WTC11 (cell line): ENCODE measurements at regions of chr12 and their contacts with region 1.

Region 1: GRCh38 chr12:89542912-89543592 is 17.2 kb upstream of the POC1B start:
- DNase-seq: peak; percentile 70
- ATAC-seq: peak; percentile 83
- H3K4me3 Mint-ChIP-seq: no peak overlapping the region
- H3K27ac Mint-ChIP-seq: no peak overlapping the region
- H3K4me1 Mint-ChIP-seq: peaks cover 9% of the 10 kb centered on the region
- H3K27me3 Mint-ChIP-seq: no peaks in the 10 kb centered on the region
- CTCF ChIP-seq: peak; percentile 69

Region 2: GRCh38 chr12:89618107-89618862 is 75.2 kb after region 1 on chr12:
- CTCF ChIA-PET with region 1: no interaction called
- POLR2A ChIA-PET with region 1: no interaction called
- DNase-seq: no peak
- ATAC-seq: no peak
- H3K4me3 Mint-ChIP-seq: no peak overlapping the region
- H3K27ac Mint-ChIP-seq: no peak overlapping the region
- H3K4me1 Mint-ChIP-seq: no peaks in the 10 kb centered on the region
- H3K27me3 Mint-ChIP-seq: no peaks in the 10 kb centered on the region
- CTCF ChIP-seq: no peak

Region 3: GRCh38 chr12:90013409-90013808 is 470.4 kb after region 1 on chr12:
- CTCF ChIA-PET with region 1: interaction called, 13 read pairs
- POLR2A ChIA-PET with region 1: no interaction called
- DNase-seq: no peak
- ATAC-seq: peak; percentile 90
- H3K4me3 Mint-ChIP-seq: no peak overlapping the region
- H3K27ac Mint-ChIP-seq: no peak overlapping the region
- H3K4me1 Mint-ChIP-seq: no peaks in the 10 kb centered on the region
- H3K27me3 Mint-ChIP-seq: no peaks in the 10 kb centered on the region
- CTCF ChIP-seq: no peak